B cell (primary cell): ENCODE measurements at regions of chr12 and their contacts with region 1.

Region 1: GRCh38 chr12:95286713-95287112 is 69.1 kb downstream of the VEZT start:
- DNase-seq: no peak
- ATAC-seq: no peak
- H3K4me3 ChIP-seq: no peak overlapping the region
- H3K4me3 Mint-ChIP-seq: no peak overlapping the region
- H3K27ac ChIP-seq: no peak overlapping the region
- H3K27ac Mint-ChIP-seq: no peak overlapping the region
- H3K4me1 ChIP-seq: no peaks in the 10 kb centered on the region
- H3K4me1 Mint-ChIP-seq: no peaks in the 10 kb centered on the region
- H3K27me3 ChIP-seq: no peaks in the 10 kb centered on the region
- H3K27me3 Mint-ChIP-seq: no peaks in the 10 kb centered on the region
- CTCF ChIP-seq: no peak

Region 2: DNA sequence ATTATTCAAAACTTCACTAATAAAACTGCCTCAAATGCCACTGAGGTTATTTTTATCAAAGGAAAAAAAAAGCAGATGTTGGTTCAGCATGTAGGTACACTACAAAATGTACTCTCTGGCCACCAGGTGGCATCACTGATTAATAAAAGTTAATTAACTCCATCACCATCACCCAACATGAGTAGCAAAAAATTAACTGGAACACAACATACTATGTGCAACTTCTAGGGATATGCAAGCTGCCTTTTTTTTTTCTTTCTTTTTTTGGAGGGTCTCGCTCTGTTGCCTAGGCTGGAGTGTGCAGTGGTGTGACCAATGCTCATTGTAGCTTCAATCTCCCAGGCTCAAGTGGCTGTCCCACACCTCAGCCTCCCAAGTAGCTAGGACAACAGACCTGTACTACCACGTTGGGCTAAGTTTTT is 169.5 kb before region 1 on chr12:
- CTCF ChIA-PET with region 1: interaction called, 5 read pairs
- POLR2A ChIA-PET with region 1: no interaction called
- intact Hi-C with region 1: loop called (anchors 10 kb)
- DNase-seq: peak; percentile 79
- ATAC-seq: peak; percentile 76
- H3K4me3 ChIP-seq: no peak overlapping the region
- H3K4me3 Mint-ChIP-seq: no peak overlapping the region
- H3K27ac ChIP-seq: no peak overlapping the region
- H3K27ac Mint-ChIP-seq: no peak overlapping the region
- H3K4me1 ChIP-seq: no peaks in the 10 kb centered on the region
- H3K4me1 Mint-ChIP-seq: no peaks in the 10 kb centered on the region
- H3K27me3 ChIP-seq: no peaks in the 10 kb centered on the region
- H3K27me3 Mint-ChIP-seq: no peaks in the 10 kb centered on the region
- CTCF ChIP-seq: peak; percentile 81

Region 3: DNA sequence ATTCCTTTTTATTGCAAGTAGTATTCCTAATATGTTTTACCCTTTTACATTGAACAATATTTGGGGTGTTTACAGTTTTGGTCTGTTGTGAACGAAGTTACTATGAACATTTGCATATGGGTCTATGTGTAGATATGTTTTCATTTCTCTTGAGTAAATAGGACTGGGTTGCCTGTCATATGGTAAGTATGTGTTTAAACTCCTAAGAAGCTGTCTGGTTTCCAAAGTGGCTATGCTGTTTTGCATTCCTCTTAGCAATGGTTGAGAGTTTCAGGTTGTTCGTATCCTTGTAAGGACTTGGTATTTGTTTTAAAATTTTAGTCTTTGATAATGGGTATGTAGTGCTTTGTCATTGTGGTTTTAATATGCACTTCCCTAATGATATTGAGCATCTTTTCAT is 193.5 kb after region 1 on chr12:
- CTCF ChIA-PET with region 1: no interaction called
- POLR2A ChIA-PET with region 1: no interaction called
- intact Hi-C with region 1: loop called (anchors 10 kb)
- DNase-seq: no peak
- ATAC-seq: no peak
- H3K4me3 ChIP-seq: no peak overlapping the region
- H3K4me3 Mint-ChIP-seq: no peak overlapping the region
- H3K27ac ChIP-seq: no peak overlapping the region
- H3K27ac Mint-ChIP-seq: no peak overlapping the region
- H3K4me1 ChIP-seq: peaks cover 4 to 17% of the 10 kb centered on the region in 2 donors
- H3K4me1 Mint-ChIP-seq: peaks cover 52% of the 10 kb centered on the region
- H3K27me3 ChIP-seq: no peaks in the 10 kb centered on the region
- H3K27me3 Mint-ChIP-seq: no peaks in the 10 kb centered on the region
- CTCF ChIP-seq: no peak